ENCODE measurements at regions of chr17 and their contacts with region 1.

Region 1: GRCh38 chr17:56833809-56834379 is at the starts of genes C17orf67 and DGKE:
- DNase-seq: peak; percentile 95 to 100 (median 98)
- ATAC-seq: peak; percentile 97
- H3K4me3 ChIP-seq: peak within 1 kb of the TSS; percentile 91
- H3K4me3 Mint-ChIP-seq: peak within 1 kb of the TSS; percentile 91 to 98 (median 95)
- H3K27ac ChIP-seq: peak within 1 kb of the TSS; percentile 85
- H3K27ac Mint-ChIP-seq: peak within 1 kb of the TSS; percentile 83 to 95 (median 93)
- H3K4me1 ChIP-seq: peaks cover 41 to 42% of the 10 kb centered on the region in 2 donors
- H3K4me1 Mint-ChIP-seq: peaks cover 34 to 74% (median 62%) of the 10 kb centered on the region in 7 donors
- H3K27me3 ChIP-seq: no peaks in the 10 kb centered on the region
- H3K27me3 Mint-ChIP-seq: no peaks in the 10 kb centered on the region
- total RNA-seq, gene C17orf67: 3.6 to 9.1 (median 5.4) TPM
- total RNA-seq, gene DGKE: 23.7 to 39.2 (median 35.6) TPM

Region 2: GRCh38 chr17:55750750-55751657 is 1082.9 kb before region 1 on chr17 and contains the start of gene PCTP:
- CTCF ChIA-PET with region 1: no interaction called
- POLR2A ChIA-PET with region 1: no interaction called
- intact Hi-C with region 1: loop called in 1 of 2 experiments (anchors 5 kb)
- DNase-seq: peak; percentile 61 to 88 (median 76)
- ATAC-seq: peak; percentile 99
- H3K4me3 ChIP-seq: peak within 1 kb of the TSS; percentile 71
- H3K4me3 Mint-ChIP-seq: peak within 1 kb of the TSS; percentile 72 to 90 (median 86)
- H3K27ac ChIP-seq: peak within 1 kb of the TSS; percentile 52
- H3K27ac Mint-ChIP-seq: peak within 1 kb of the TSS; percentile 11 to 89 (median 60)
- H3K4me1 ChIP-seq: peaks cover 0 to 5% of the 10 kb centered on the region in 2 donors
- H3K4me1 Mint-ChIP-seq: peaks cover 7 to 26% (median 19%) of the 10 kb centered on the region in 7 donors
- H3K27me3 ChIP-seq: no peaks in the 10 kb centered on the region
- H3K27me3 Mint-ChIP-seq: peaks cover 19 to 39% (median 20%) of the 10 kb centered on the region in 5 donors
- total RNA-seq, gene PCTP: 2.7 to 7.4 (median 3.5) TPM

Region 3: GRCh38 chr17:56866496-56866895 is 32.6 kb after region 1 on chr17:
- CTCF ChIA-PET with region 1: no interaction called
- POLR2A ChIA-PET with region 1: no interaction called
- intact Hi-C with region 1: loop called in 1 of 2 experiments (anchors 5 kb)
- DNase-seq: peak in 1 of 9 donors; percentile 6
- ATAC-seq: no peak
- H3K4me3 ChIP-seq: no peak overlapping the region
- H3K4me3 Mint-ChIP-seq: no peak overlapping the region
- H3K27ac ChIP-seq: no peak overlapping the region
- H3K27ac Mint-ChIP-seq: peak overlapping the region in 1 of 9 donors; percentile 57
- H3K4me1 ChIP-seq: no peaks in the 10 kb centered on the region
- H3K4me1 Mint-ChIP-seq: peaks cover 0 to 6% (median 0%) of the 10 kb centered on the region in 7 donors
- H3K27me3 ChIP-seq: no peaks in the 10 kb centered on the region
- H3K27me3 Mint-ChIP-seq: no peaks in the 10 kb centered on the region

Region 4: GRCh38 chr17:56960596-56961538 is 127.0 kb after region 1 on chr17 and contains the start of gene COIL:
- CTCF ChIA-PET with region 1: interaction called, 4 read pairs
- POLR2A ChIA-PET with region 1: no interaction called
- intact Hi-C with region 1: loop called (anchors 1 kb)
- DNase-seq: peak; percentile 90 to 96 (median 92)
- ATAC-seq: peak; percentile 100
- H3K4me3 ChIP-seq: peak within 1 kb of the TSS; percentile 80
- H3K4me3 Mint-ChIP-seq: peak within 1 kb of the TSS; percentile 80 to 93 (median 86)
- H3K27ac ChIP-seq: peak within 1 kb of the TSS; percentile 97
- H3K27ac Mint-ChIP-seq: peak within 1 kb of the TSS; percentile 78 to 95 (median 91)
- H3K4me1 ChIP-seq: peaks cover 6 to 11% of the 10 kb centered on the region in 2 donors
- H3K4me1 Mint-ChIP-seq: peaks cover 14 to 34% (median 28%) of the 10 kb centered on the region in 7 donors
- H3K27me3 ChIP-seq: no peaks in the 10 kb centered on the region
- H3K27me3 Mint-ChIP-seq: peaks cover 0 to 3% (median 0%) of the 10 kb centered on the region in 5 donors
- total RNA-seq, gene COIL: 13.1 to 22.7 (median 19.0) TPM

Region 5: DNA sequence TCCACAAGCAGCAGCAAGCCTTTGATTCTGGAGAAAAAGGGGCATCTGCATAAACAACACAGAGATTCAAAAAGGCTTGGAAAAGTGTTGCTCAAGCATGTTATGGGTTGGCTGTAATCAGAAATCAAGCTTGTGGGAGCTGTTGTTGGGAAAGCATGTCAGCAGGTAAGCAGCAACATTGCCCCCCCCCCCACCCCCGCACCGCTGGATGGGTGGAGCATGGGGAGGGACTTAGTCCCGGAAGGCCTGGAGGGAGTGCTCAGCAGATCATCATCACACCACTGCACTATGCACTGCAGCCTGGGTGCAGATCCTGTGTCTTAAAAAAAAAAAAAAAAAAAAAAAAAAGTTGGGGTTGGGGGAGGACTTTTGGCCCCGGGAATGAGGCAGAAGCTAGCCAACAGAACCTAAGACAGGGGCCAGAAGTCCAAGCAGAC is 234.3 kb after region 1 on chr17:
- CTCF ChIA-PET with region 1: no interaction called
- POLR2A ChIA-PET with region 1: no interaction called
- intact Hi-C with region 1: no loop called
- DNase-seq: no peak
- ATAC-seq: no peak
- H3K4me3 ChIP-seq: no peak overlapping the region
- H3K4me3 Mint-ChIP-seq: no peak overlapping the region
- H3K27ac ChIP-seq: no peak overlapping the region
- H3K27ac Mint-ChIP-seq: no peak overlapping the region
- H3K4me1 ChIP-seq: no peaks in the 10 kb centered on the region
- H3K4me1 Mint-ChIP-seq: no peaks in the 10 kb centered on the region
- H3K27me3 ChIP-seq: peaks cover 0 to 4% of the 10 kb centered on the region in 2 donors
- H3K27me3 Mint-ChIP-seq: peaks cover 0 to 19% (median 6%) of the 10 kb centered on the region in 5 donors

Measured in naive thymus-derived CD4-positive, alpha-beta T cell (primary cell).